K562 (cell line): ENCODE measurements at regions of chr10 and their contacts with region 1.

Region 1: DNA sequence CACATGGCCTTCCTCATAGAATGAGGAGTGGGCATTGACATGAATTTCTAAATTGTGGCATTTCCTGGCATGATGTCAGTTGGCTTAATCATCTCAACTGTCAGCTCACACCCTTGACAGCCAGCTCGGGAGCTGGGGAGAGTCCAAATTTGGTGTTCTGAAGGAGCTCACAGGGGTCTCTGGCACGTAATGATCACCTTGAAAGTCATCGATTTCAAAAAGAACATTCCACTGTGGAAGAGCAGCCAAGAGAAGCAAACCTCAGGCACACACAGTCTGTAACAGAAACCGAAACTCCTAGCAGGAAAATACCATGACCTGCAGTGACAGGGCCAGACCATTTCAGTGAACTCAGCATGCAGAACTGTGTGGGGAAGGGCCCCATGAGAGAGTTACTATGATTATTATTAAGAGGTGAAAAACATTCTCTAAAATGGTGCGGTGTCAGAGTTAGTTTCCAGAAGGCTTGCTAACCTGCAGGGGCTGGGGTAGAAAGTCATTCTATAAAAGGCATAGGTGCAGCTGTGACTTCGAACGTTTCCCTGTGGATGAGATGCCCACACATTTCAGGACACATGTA is 26.4 kb upstream of the KLF6 start:
- DNase-seq: no peak
- ATAC-seq: 0 out of 3 replicates have a peak, but pooled peaks have one; percentile 7
- H3K4me3 ChIP-seq: no peak overlapping the region
- H3K27ac ChIP-seq: peak overlapping the region; percentile 91
- H3K4me1 ChIP-seq: peaks cover 38 to 54% of the 10 kb centered on the region in 2 experiments
- H3K27me3 ChIP-seq: no peaks in the 10 kb centered on the region; a peak in 1 of 5 replicates
- CTCF ChIP-seq: no peak
- EP300 ChIP-seq: no peak
- POLR2A ChIP-seq: no peak
- RAD21 ChIP-seq: no peak

Region 2: DNA sequence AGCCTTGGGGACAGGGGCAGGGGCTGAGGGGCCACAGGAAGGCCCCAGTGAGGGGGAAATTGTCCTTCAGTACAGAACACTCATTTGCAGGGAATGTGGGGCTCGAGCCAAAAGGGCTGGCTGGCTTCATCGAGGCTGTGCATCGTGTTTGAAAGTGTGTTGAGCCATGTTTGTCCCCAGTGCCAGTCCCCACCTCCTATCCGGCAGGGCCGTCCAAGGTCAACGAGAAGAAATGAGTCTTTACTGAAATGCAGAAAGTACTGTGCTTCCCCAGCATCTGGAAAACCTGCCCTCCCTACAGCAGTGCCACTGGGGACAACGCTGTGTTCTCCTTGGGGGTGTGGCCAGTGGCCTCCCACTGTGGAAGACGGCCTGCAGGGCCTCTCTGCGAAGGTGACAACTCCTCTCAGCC is 240.5 kb before region 1 on chr10:
- CTCF ChIA-PET with region 1: no interaction called
- POLR2A ChIA-PET with region 1: no interaction called
- in situ Hi-C with region 1: no loop called
- intact Hi-C with region 1: no loop called
- DNase-seq: no peak
- ATAC-seq: peak; percentile 33; the same call in 1 of the 3 replicates
- H3K4me3 ChIP-seq: no peak overlapping the region
- H3K27ac ChIP-seq: no peak overlapping the region
- H3K4me1 ChIP-seq: peaks cover 0 to 4% of the 10 kb centered on the region in 2 experiments; a peak in 3 of 5 replicates
- H3K27me3 ChIP-seq: peaks cover 13 to 39% of the 10 kb centered on the region in 2 experiments; a peak in 4 of 5 replicates
- CTCF ChIP-seq: no peak
- EP300 ChIP-seq: no peak
- POLR2A ChIP-seq: no peak
- RAD21 ChIP-seq: no peak

Region 3: DNA sequence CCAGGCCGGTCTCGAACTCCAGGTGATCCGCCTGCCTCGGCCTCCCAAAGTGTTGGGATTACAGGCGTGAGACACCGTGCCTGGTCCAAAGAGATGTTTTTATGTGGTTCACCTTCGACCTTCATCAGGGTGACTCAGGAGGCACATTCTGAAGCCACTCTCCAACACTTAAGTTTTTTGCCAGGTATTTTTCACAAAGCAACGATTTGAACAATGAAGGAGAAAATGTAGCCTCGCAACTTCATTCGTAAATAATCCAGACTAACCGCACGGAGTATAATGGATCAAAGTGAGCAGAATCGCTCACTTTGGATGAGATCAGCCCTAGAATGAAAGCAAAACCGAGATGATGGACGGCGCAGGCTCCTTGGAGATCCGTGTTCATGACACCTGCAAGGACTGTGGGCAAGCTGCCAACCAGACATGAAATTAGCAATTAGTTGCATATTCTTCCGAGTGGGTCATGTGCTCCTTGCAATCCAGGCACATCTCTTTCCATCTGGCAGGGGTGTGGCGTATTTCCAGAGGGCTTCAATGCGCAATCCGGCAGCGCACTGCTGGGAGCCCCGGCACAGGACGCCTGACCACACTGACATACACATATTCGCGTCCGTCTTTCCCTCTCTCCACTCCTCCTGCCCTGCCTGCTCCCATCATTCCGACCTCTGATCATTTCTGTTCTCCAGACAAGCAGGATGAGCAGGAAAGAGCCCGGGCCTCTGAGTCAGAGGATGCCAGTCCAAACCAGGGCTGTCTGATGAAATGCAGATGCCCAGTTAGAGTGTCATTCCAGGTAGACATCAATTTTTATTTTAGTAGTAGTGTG is 174.8 kb before region 1 on chr10:
- CTCF ChIA-PET with region 1: no interaction called
- POLR2A ChIA-PET with region 1: no interaction called
- in situ Hi-C with region 1: no loop called
- intact Hi-C with region 1: no loop called
- DNase-seq: no peak
- ATAC-seq: no peak
- H3K4me3 ChIP-seq: no peak overlapping the region
- H3K27ac ChIP-seq: no peak overlapping the region
- H3K4me1 ChIP-seq: no peaks in the 10 kb centered on the region
- H3K27me3 ChIP-seq: peaks cover 4 to 17% of the 10 kb centered on the region in 2 experiments; a peak in 2 of 5 replicates
- CTCF ChIP-seq: no peak
- EP300 ChIP-seq: no peak
- POLR2A ChIP-seq: no peak
- RAD21 ChIP-seq: no peak

Region 4: GRCh38 chr10:3822541-3823330 is 11.4 kb after region 1 on chr10:
- CTCF ChIA-PET with region 1: no interaction called
- POLR2A ChIA-PET with region 1: interaction called, 12 read pairs
- in situ Hi-C with region 1: no loop called
- intact Hi-C with region 1: no loop called
- DNase-seq: no peak
- ATAC-seq: no peak
- H3K4me3 ChIP-seq: no peak overlapping the region
- H3K27ac ChIP-seq: no peak overlapping the region
- H3K4me1 ChIP-seq: peaks cover 11 to 12% of the 10 kb centered on the region in 2 experiments
- H3K27me3 ChIP-seq: no peaks in the 10 kb centered on the region
- CTCF ChIP-seq: no peak
- EP300 ChIP-seq: no peak
- POLR2A ChIP-seq: no peak
- RAD21 ChIP-seq: no peak

Region 5: DNA sequence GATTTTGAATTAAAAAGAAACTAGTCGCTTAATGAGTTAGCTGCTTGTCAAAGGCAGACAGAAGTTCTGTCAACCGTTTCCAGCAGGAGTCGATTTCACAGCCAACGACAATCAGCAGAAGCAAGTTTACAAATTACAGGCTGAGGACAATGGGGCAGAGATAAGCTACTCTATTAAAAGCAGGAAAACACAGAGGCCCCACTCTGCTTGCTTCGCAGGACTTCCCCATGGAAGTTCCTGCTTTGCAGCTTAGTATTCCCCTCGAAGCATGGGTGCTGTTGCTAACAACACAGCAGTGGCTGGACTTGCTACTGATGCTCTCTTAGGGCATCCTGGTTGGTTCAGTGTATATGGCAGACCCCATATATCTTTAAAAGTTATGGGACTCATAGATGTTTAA is 24.4 kb after region 1 on chr10:
- CTCF ChIA-PET with region 1: no interaction called
- POLR2A ChIA-PET with region 1: no interaction called
- in situ Hi-C with region 1: no loop called
- intact Hi-C with region 1: loop called (anchors 1 kb)
- DNase-seq: peak in 2 of 4 experiments; percentile 49 to 68
- ATAC-seq: peak; percentile 60
- H3K4me3 ChIP-seq: no peak overlapping the region
- H3K27ac ChIP-seq: peak overlapping the region; percentile 37; the same call in 1 of the 3 replicates
- H3K4me1 ChIP-seq: peaks cover 0 to 28% of the 10 kb centered on the region in 2 experiments; a peak in 4 of 5 replicates
- H3K27me3 ChIP-seq: no peaks in the 10 kb centered on the region
- CTCF ChIP-seq: no peak
- EP300 ChIP-seq: no peak; the same call in 1 of the 2 replicates
- POLR2A ChIP-seq: no peak
- RAD21 ChIP-seq: peak; percentile 8 to 25; a peak in 2 of 4 replicates

Region 6: DNA sequence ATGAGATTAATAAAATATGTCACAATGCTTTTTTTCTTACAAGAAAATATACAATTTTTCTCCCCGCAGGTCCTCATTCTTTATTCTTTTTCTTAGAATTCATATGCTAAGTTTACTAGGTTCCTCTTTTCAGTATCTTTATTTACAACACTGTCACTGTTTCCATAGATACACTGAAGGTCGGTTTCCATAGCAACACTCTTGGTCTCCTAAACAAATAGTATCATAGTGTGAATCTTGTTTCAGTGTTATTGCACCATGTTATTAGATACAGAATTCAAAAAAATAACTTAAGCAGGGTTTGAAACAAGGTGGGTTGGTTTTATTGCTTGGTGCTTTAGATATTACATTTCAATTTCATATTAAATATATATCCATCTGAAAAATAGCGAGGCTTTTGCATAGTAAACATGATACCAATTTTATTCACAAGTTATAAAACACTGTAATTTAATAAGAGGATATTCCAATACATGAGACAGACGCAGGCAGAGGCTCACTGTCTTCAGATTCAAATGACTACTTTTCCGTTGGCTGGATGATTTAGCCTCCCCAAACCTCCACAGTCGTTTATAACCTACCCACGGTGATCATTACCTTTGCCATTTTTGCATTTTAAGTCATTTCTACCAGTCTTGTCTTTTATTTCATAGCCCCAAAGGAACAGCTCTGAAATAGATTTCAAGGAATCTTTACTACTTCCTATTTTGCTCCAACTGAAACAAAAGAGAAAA is 62.5 kb after region 1 on chr10:
- CTCF ChIA-PET with region 1: no interaction called
- POLR2A ChIA-PET with region 1: no interaction called
- in situ Hi-C with region 1: no loop called
- intact Hi-C with region 1: no loop called
- DNase-seq: peak; percentile 39 to 51 (median 42)
- ATAC-seq: peak; percentile 53
- H3K4me3 ChIP-seq: no peak overlapping the region
- H3K27ac ChIP-seq: peak overlapping the region; percentile 1; the same call in 1 of the 3 replicates
- H3K4me1 ChIP-seq: peaks cover 4 to 6% of the 10 kb centered on the region in 2 experiments; a peak in 3 of 5 replicates
- H3K27me3 ChIP-seq: no peaks in the 10 kb centered on the region
- CTCF ChIP-seq: no peak
- EP300 ChIP-seq: peak; percentile 78
- POLR2A ChIP-seq: no peak
- RAD21 ChIP-seq: no peak

Region 7: DNA sequence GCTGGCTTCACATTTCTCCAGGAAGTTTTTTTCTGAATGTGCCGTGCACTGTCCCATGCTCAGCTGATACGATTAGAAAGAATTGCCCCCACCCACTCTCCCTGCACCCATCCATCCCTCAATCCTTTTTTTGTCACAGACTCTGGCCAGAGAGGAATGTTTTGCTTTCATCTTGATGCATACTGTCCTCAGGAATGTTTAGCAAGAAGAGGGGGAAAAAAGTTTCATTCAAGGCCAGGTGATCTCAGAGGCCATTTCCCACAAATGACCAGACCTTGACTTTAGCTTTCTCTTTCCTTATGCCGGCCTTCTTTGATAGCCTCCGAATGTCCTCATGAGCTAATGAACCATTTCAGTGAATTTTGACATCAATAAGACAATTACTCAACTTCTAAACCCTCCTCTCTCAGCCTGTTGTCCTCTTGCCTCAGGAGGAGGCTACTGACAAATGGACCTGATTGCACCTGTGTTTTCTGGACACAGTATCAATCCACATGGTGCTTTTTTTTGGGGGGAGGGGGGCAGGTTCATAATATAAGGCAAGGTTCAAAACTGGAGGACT is 78.7 kb after region 1 on chr10:
- CTCF ChIA-PET with region 1: no interaction called
- POLR2A ChIA-PET with region 1: interaction called, 4 read pairs
- in situ Hi-C with region 1: no loop called
- intact Hi-C with region 1: loop called (anchors 2 kb)
- DNase-seq: no peak
- ATAC-seq: no peak
- H3K4me3 ChIP-seq: no peak overlapping the region
- H3K27ac ChIP-seq: peak overlapping the region; percentile 56; the same call in 1 of the 3 replicates
- H3K4me1 ChIP-seq: peaks cover 10 to 47% of the 10 kb centered on the region in 2 experiments; a peak in 4 of 5 replicates
- H3K27me3 ChIP-seq: no peaks in the 10 kb centered on the region
- CTCF ChIP-seq: no peak
- EP300 ChIP-seq: no peak
- POLR2A ChIP-seq: no peak
- RAD21 ChIP-seq: no peak